ENCODE measurements at regions of chr10 and their contacts with region 1.

Region 1: GRCh38 chr10:34637418-34637911 is 177.6 kb downstream of the PARD3 start:
- DNase-seq: peak; percentile 78
- H3K4me3 ChIP-seq: no peak overlapping the region
- H3K27ac ChIP-seq: no peak overlapping the region
- H3K4me1 ChIP-seq: peaks cover 0 to 55% (median 26%) of the 10 kb centered on the region in 4 donors
- H3K27me3 ChIP-seq: no peaks in the 10 kb centered on the region
- CTCF ChIP-seq: peak; percentile 64 to 97 (median 94)
- EP300 ChIP-seq: no peak
- POLR2A ChIP-seq: no peak

Region 2: GRCh38 chr10:33193057-33193700 is 1444.3 kb before region 1 on chr10:
- intact Hi-C with region 1: loop called (anchors 2 kb)
- DNase-seq: peak; percentile 91
- H3K4me3 ChIP-seq: no peak overlapping the region
- H3K27ac ChIP-seq: peak overlapping the region in 3 of 4 donors; percentile 10 to 50 (median 32)
- H3K4me1 ChIP-seq: peaks cover 0 to 24% (median 20%) of the 10 kb centered on the region in 4 donors
- H3K27me3 ChIP-seq: no peaks in the 10 kb centered on the region
- CTCF ChIP-seq: peak; percentile 35 to 74 (median 60)
- EP300 ChIP-seq: no peak
- POLR2A ChIP-seq: no peak

Region 3: DNA sequence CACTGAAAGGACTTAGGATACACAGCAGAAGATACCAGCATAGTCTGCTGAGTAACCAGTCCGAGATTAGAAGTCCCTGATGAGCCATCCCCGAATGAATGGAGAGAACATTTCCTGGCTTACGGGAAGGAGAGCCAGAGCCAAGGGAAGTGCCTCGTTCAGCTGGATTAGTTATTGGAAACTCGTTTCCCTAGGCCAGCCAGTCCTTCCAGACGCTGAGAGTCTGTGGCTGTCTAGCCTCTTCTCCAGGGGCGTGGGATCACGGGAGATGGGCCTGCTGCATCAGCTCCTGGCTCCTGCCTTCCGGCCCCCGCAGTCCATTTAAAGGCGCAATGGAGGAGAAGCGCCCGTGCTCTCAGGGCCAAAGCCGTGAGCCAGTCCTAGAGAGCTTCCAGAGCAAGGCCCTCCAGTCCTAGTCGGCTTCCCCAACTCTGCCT is 535.2 kb before region 1 on chr10:
- intact Hi-C with region 1: loop called (anchors 10 kb)
- DNase-seq: peak; percentile 93
- H3K4me3 ChIP-seq: no peak overlapping the region
- H3K27ac ChIP-seq: peak overlapping the region; percentile 62 to 79 (median 72)
- H3K4me1 ChIP-seq: peaks cover 0 to 22% (median 7%) of the 10 kb centered on the region in 4 donors
- H3K27me3 ChIP-seq: no peaks in the 10 kb centered on the region
- CTCF ChIP-seq: no peak
- EP300 ChIP-seq: no peak
- POLR2A ChIP-seq: no peak

Region 4: DNA sequence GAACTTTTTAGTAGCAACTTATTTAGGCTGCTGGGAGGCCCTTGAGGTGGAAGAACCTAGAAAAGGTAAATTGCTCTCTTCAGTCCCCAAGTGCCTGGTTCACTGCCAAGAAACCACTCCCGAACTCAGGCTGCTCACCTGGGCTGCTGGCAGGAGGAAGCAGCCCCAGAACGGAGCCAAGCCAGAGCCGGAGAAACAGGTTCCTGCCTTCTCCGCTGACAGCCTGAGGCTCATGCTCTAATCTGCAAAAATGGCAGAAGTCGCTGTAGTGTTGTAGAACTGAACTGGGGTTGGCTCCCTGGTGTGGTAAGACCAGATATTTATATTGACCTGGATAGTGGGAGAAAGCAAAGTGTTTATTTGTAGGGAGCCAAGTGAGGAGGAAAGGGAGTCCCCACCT is 316.7 kb after region 1 on chr10:
- intact Hi-C with region 1: no loop called
- DNase-seq: no peak
- H3K4me3 ChIP-seq: no peak overlapping the region
- H3K27ac ChIP-seq: no peak overlapping the region
- H3K4me1 ChIP-seq: no peaks in the 10 kb centered on the region
- H3K27me3 ChIP-seq: no peaks in the 10 kb centered on the region
- CTCF ChIP-seq: no peak
- EP300 ChIP-seq: no peak
- POLR2A ChIP-seq: no peak

Region 5: GRCh38 chr10:35184527-35185171 is 547.2 kb after region 1 on chr10:
- intact Hi-C with region 1: no loop called
- DNase-seq: no peak
- H3K4me3 ChIP-seq: no peak overlapping the region
- H3K27ac ChIP-seq: no peak overlapping the region
- H3K4me1 ChIP-seq: peaks cover 0 to 12% (median 4%) of the 10 kb centered on the region in 4 donors
- H3K27me3 ChIP-seq: no peaks in the 10 kb centered on the region
- CTCF ChIP-seq: no peak
- EP300 ChIP-seq: no peak
- POLR2A ChIP-seq: no peak